Activated naive CD4-positive, alpha-beta T cell treated with anti-CD3 and anti-CD28 coated beads for 36 hours (primary cell): ENCODE measurements at regions of chr7 and their contacts with region 1.

Region 1: DNA sequence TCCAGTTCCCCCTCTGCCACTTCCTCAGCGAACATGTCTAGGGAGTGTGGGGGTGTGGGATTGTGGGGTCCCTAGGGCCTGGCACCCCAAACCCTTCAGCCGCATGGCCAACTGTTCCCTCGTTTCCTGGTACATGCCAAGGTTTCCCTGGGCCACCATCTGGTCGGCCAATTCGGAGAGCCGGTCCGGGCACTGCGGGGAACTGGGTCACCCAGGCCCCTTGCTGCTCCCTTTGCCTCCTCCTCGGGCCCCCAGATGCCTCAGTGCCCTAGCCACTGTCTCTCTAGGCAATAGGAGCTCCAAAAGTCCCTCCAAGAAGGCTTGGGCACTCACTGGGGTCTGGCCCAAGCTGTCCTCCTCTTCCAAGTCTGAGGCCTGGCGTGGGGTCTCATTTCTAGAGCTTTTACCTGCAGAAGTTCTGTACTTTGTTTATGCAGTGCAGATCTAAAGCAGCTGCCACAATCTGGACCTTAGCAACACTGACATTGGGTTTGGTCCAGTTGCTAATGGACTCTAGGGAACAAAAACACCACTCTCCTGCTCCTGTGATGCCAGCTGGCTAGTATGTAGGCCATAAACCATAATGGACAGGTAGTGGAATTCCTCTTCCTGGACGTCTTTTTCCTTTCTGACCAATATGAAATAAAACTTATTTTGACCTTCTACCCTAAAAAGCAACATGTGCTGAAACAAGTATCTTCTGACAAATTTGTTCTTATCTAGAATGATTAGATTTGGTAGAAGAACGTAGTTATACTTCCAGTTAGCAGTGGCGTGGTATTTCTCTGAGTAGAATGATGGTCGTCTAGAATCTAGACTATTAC is 172.9 kb downstream of the LRRC4 start:
- DNase-seq: no peak
- H3K4me3 Mint-ChIP-seq: no peak overlapping the region
- H3K27ac Mint-ChIP-seq: no peak overlapping the region
- H3K4me1 Mint-ChIP-seq: peaks cover 54% of the 10 kb centered on the region
- H3K27me3 Mint-ChIP-seq: no peaks in the 10 kb centered on the region

Region 2: GRCh38 chr7:127585044-127585953 is 273.0 kb before region 1 on chr7 and contains the start of gene GCC1:
- CTCF ChIA-PET with region 1: no interaction called
- intact Hi-C with region 1: loop called (anchors 5 kb)
- DNase-seq: peak; percentile 94
- H3K4me3 Mint-ChIP-seq: peak within 1 kb of the TSS; percentile 89
- H3K27ac Mint-ChIP-seq: peak within 1 kb of the TSS; percentile 70
- H3K4me1 Mint-ChIP-seq: peaks cover 66% of the 10 kb centered on the region
- H3K27me3 Mint-ChIP-seq: no peaks in the 10 kb centered on the region
- total RNA-seq, gene GCC1: 11.0 to 12.0 TPM

Region 3: DNA sequence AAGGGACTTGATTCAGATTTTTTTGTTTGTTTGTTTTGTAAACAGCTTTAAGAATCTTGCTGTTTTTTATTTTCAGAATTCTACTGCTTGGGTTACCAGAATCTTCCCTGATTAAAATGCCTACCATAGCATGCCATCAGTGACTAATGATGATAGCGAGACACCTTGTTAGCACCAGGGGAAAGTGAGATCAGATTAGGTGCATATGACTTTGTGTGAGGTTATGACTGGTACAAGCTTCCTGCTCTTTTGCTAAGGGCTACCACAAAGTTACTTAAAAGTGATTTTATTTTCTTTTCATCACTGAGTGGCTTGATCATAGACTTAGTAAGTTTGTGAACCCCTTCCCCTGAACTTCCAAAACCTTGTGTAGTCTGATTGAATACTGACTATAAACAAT is 112.9 kb before region 1 on chr7:
- CTCF ChIA-PET with region 1: no interaction called
- intact Hi-C with region 1: loop called (anchors 1 kb)
- DNase-seq: peak; percentile 27
- H3K4me3 Mint-ChIP-seq: no peak overlapping the region
- H3K27ac Mint-ChIP-seq: peak overlapping the region; percentile 19
- H3K4me1 Mint-ChIP-seq: peaks cover 51% of the 10 kb centered on the region
- H3K27me3 Mint-ChIP-seq: no peaks in the 10 kb centered on the region

Region 4: DNA sequence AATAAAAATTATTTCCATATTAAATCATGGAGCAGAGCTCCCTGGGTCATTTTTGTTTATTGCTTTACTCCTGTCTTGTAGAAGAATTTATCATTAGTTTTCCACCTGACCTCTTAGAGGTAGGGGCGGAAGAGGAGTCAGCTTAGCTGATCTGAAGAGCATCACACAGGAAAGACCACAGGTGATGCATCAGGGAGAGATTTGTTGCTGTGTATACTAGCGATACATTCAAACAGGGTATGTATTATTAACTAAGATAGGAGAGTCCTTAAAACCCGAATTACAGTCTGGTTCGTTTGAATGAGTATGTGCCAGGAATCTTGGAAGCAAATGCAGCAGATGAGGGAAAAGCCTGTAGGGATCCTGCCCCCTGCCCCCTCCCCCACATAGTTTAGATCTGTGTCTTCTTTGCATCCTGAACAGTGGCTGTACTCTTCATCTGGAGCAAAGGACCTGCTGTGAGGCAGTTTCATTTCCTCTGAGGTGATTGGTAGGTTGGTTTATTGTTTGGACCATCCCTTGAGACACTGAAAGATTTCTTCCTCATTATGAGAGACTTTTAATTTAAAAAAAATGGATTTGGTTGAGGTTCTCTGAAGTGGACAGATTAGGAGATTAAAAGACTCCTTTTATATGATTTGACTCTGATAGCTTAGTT is 29.3 kb before region 1 on chr7:
- CTCF ChIA-PET with region 1: no interaction called
- intact Hi-C with region 1: no loop called
- DNase-seq: no peak
- H3K4me3 Mint-ChIP-seq: no peak overlapping the region
- H3K27ac Mint-ChIP-seq: no peak overlapping the region
- H3K4me1 Mint-ChIP-seq: no peaks in the 10 kb centered on the region
- H3K27me3 Mint-ChIP-seq: no peaks in the 10 kb centered on the region

Region 5: GRCh38 chr7:128108641-128109423 is 250.5 kb after region 1 on chr7:
- CTCF ChIA-PET with region 1: no interaction called
- intact Hi-C with region 1: loop called (anchors 1 kb)
- DNase-seq: peak; percentile 45
- H3K4me3 Mint-ChIP-seq: no peak overlapping the region
- H3K27ac Mint-ChIP-seq: peak overlapping the region; percentile 62
- H3K4me1 Mint-ChIP-seq: peaks cover 66% of the 10 kb centered on the region
- H3K27me3 Mint-ChIP-seq: peaks cover under 1% of the 10 kb centered on the region

Region 6: DNA sequence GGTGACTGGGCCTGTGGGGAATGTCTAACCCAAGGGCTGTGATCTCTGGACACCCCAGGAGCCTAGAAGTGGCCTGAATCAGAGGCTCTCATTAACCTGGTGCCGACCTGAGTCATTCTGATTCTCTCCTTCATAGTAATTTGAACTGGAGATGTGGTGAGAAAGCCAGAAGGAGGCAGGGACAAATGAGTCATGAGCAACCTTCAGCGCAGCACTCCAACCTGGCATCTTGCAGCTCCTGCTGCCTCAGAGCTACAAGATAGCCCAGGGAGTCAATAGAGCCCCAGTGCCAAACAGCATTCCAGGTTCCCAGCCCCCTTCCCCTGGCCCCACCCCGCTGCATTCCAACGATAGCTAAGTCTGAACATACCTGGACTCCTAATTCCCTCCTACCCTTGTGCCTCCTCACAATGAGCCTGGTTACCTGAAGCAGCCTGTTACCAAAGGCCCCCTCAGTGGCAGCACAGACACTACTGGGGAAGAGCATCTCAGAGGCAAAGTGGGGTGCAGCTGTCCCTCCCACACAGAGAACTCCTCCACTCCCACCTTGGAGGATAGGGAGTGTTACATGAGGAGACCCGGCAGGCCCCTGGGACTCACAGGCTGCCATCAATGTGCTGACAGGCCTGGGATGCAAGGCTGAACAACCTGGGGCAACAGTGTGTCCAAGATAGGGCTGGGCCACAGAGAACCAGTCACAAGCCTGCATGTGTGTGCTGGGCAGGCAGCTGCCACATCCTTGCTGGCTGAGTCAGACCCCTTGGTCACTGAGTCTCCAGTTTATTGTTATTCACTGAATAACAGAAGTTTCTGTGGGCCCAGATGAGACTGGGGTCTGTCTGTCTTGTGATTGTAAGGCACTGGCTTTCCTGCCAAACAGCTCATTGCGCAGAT is 306.0 kb after region 1 on chr7:
- CTCF ChIA-PET with region 1: no interaction called
- intact Hi-C with region 1: no loop called
- DNase-seq: no peak
- H3K4me3 Mint-ChIP-seq: no peak overlapping the region
- H3K27ac Mint-ChIP-seq: no peak overlapping the region
- H3K4me1 Mint-ChIP-seq: peaks cover 8% of the 10 kb centered on the region
- H3K27me3 Mint-ChIP-seq: peaks cover 42% of the 10 kb centered on the region